ENCODE measurements at regions of chr9 and their contacts with region 1.

Region 1: GRCh38 chr9:110152704-110153374 is 55.1 kb downstream of the C9orf152 start:
- ATAC-seq: peak in 7 of 8 experiments; percentile 7 to 87 (median 76)
- H3K4me3 ChIP-seq: no peak overlapping the region
- H3K27ac ChIP-seq: no peak overlapping the region
- H3K4me1 ChIP-seq: peaks cover 1 to 4% of the 10 kb centered on the region in 2 donors

Region 2: GRCh38 chr9:109574068-109574882 is 578.6 kb before region 1 on chr9:
- in situ Hi-C with region 1: loop called in 2 of 9 experiments (anchors 10 to 25 kb)
- ATAC-seq: peak; percentile 46 to 90 (median 68)
- H3K4me3 ChIP-seq: no peak overlapping the region
- H3K27ac ChIP-seq: no peak overlapping the region
- H3K4me1 ChIP-seq: no peaks in the 10 kb centered on the region

Region 3: DNA sequence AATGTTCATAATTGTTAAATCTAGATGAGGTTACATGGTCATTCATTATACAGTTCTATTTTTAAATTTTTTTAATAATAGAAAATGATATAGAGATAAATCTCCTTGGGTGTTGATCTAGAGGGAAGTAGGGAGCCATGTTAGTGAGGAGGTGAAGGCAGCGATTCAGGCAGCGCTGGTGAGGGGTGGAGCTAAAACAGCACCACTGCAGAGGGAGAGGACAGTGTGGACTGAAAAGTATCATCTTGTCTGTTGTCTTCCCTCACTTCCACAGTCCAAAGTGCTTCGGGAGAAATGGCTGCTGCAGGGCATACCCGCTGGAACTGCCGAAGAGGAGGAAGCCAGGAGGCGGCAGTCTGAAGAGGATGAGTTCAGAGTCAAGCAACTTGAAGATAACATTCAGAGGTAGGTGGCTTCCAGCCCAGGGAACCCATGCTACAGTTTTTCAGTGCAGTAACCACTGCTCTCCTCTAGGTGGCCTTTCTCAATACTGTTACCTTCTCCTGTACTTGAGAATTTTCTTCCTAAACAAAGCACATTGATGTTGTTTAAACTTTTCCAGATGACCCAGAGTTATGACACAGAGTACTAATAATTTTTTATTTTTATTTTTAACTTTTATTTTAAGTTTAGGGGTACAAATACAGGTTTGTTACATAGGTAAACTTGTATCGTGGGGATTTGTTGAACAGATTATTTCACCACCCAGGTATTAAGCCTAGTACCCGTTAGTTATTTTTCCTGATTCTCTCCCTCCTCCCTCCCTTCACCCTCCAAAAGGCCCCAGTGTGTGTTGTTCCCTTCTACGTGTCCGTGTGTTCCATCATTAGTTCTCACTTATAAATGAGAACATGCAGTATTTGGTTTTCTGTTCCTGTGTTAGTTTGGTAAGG is 272.3 kb before region 1 on chr9:
- in situ Hi-C with region 1: loop called in 1 of 9 experiments (anchors 25 kb)
- ATAC-seq: peak in 3 of 8 experiments; percentile 48 to 67 (median 58)
- H3K4me3 ChIP-seq: no peak overlapping the region
- H3K27ac ChIP-seq: no peak overlapping the region
- H3K4me1 ChIP-seq: no peaks in the 10 kb centered on the region

Region 4: GRCh38 chr9:109894921-109895758 is 257.7 kb before region 1 on chr9:
- in situ Hi-C with region 1: loop called (anchors 10 to 25 kb)
- ATAC-seq: peak in 6 of 8 experiments; percentile 19 to 76 (median 46)
- H3K4me3 ChIP-seq: no peak overlapping the region
- H3K27ac ChIP-seq: no peak overlapping the region
- H3K4me1 ChIP-seq: no peaks in the 10 kb centered on the region

Region 5: DNA sequence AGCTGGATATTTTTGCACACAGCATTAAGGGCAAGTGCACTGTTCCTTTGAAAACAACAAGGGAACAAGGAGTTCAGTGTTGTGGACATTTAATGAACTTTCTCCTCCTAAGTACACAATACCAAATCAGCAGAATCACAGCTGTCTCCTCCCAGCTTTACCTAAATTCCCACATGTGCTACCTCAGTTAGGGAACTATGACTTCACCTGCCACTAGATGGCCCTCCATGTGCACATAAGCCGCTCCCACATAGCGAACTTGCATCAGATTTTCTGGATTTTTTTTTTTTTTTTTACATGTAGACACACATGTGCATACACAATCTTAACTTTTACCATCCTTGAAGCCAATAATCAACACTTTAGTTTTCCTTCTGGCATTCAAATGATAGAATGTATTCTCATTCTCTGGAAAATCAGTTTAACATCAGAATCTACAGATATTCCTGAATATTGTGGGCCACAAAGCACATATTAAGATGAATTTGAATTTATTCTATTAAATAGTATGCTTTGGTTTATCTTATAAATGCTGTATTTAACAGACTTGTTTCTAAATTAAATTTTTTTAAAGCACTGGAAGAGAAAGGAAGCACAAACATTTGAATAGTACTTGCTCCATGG is 249.2 kb before region 1 on chr9:
- in situ Hi-C with region 1: loop called (anchors 10 to 25 kb)
- ATAC-seq: peak; percentile 45 to 92 (median 83)
- H3K4me3 ChIP-seq: no peak overlapping the region
- H3K27ac ChIP-seq: no peak overlapping the region
- H3K4me1 ChIP-seq: peaks cover 2 to 7% of the 10 kb centered on the region in 2 donors

Region 6: GRCh38 chr9:110058304-110058953 is 94.4 kb before region 1 on chr9:
- in situ Hi-C with region 1: loop called in 1 of 9 experiments (anchors 25 kb)
- ATAC-seq: peak in 5 of 8 experiments; percentile 26 to 78 (median 64)
- H3K4me3 ChIP-seq: no peak overlapping the region
- H3K27ac ChIP-seq: no peak overlapping the region
- H3K4me1 ChIP-seq: peaks cover 0 to 3% of the 10 kb centered on the region in 2 donors

Region 7: DNA sequence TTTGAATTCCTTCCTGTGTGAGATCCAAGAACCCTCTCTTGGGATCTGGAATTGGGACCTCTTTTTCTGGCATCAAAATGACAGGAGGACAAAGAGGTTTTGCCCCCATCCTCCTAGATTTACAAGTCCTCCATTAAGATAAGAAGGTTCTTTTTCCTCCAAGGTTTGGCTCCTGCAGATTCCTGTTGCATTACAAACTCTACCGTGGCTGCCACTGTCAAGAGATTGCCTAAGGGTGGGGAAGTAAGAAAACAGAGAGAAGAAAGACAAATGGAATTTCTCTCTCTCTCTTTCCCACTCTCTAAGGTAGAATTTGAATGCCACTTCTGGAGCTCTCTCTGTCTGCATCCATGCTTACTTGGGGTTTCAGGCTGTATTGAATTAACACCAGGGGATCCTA is 438.7 kb after region 1 on chr9:
- in situ Hi-C with region 1: no loop called
- ATAC-seq: peak in 1 of 8 experiments; percentile 37
- H3K4me3 ChIP-seq: no peak overlapping the region
- H3K27ac ChIP-seq: no peak overlapping the region
- H3K4me1 ChIP-seq: no peaks in the 10 kb centered on the region

Measured in motor neuron (in vitro differentiated cells).